PC-9 (cell line): ENCODE measurements at regions of chr11 and their contacts with region 1.

Region 1: GRCh38 chr11:46616998-46617675 is at the starts of genes ATG13 and HARBI1:
- DNase-seq: peak; percentile 72 to 94
- H3K4me3 ChIP-seq: peak within 1 kb of the TSS; percentile 95
- H3K27ac ChIP-seq: peak within 1 kb of the TSS; percentile 95
- H3K4me1 ChIP-seq: peaks cover 24% of the 10 kb centered on the region
- H3K27me3 ChIP-seq: no peaks in the 10 kb centered on the region
- CTCF ChIP-seq: no peak
- total RNA-seq, gene ATG13: 109 TPM in 2 replicates
- total RNA-seq, gene HARBI1: 6.6 and 8.0 TPM in 2 replicates

Region 2: GRCh38 chr11:46380340-46381047 is 236.6 kb before region 1 on chr11:
- CTCF ChIA-PET with region 1: interaction called, 3 read pairs
- POLR2A ChIA-PET with region 1: no interaction called
- intact Hi-C with region 1: loop called (anchors 5 kb)
- DNase-seq: peak; percentile 33 to 80
- H3K4me3 ChIP-seq: peak overlapping the region; percentile 73
- H3K27ac ChIP-seq: peak overlapping the region; percentile 5; the same call in 1 of the 2 replicates
- H3K4me1 ChIP-seq: peaks cover 21% of the 10 kb centered on the region
- H3K27me3 ChIP-seq: no peaks in the 10 kb centered on the region
- CTCF ChIP-seq: no peak

Region 3: GRCh38 chr11:46537537-46538295 is 79.4 kb before region 1 on chr11:
- CTCF ChIA-PET with region 1: no interaction called
- POLR2A ChIA-PET with region 1: no interaction called
- intact Hi-C with region 1: loop called (anchors 1 kb)
- DNase-seq: peak; percentile 66 to 76
- H3K4me3 ChIP-seq: no peak overlapping the region
- H3K27ac ChIP-seq: 0 out of 2 replicates have a peak overlapping the region, but pooled peaks have one; percentile 5
- H3K4me1 ChIP-seq: peaks cover 8% of the 10 kb centered on the region; the same call in 1 of the 2 replicates
- H3K27me3 ChIP-seq: no peaks in the 10 kb centered on the region
- CTCF ChIP-seq: peak; percentile 97

Region 4: GRCh38 chr11:46603704-46604308 is 13.3 kb before region 1 on chr11:
- CTCF ChIA-PET with region 1: no interaction called
- POLR2A ChIA-PET with region 1: no interaction called
- intact Hi-C with region 1: no loop called
- DNase-seq: no peak
- H3K4me3 ChIP-seq: no peak overlapping the region
- H3K27ac ChIP-seq: no peak overlapping the region
- H3K4me1 ChIP-seq: no peaks in the 10 kb centered on the region
- H3K27me3 ChIP-seq: no peaks in the 10 kb centered on the region
- CTCF ChIP-seq: no peak

Region 5: DNA sequence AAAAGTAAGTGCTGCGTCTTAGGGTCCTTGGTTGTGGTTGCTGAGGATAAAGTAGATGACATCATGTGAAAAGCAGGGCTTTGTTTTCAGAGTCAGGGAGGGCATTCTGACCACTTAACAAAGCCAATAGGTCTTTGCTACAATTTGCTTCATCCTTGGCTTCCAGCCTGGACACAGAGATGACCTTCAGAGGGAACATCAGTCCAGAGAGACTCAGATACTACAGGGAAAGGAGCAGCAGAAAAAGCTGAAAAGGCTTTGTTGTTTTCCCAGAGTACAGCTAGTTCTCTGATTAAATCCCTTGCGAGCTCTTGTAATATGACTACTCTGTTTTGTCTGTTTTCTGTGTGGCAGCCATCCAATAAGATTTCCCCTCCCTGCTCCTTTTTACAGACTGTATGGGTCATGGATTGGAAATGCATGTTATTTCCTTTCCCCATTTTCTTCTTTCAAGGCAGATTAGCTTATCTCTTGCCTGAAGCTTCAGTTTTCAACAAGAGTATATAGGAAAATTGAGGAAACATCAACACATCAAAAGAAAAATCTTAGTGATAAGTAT is 32.1 kb after region 1 on chr11:
- CTCF ChIA-PET with region 1: no interaction called
- POLR2A ChIA-PET with region 1: no interaction called
- intact Hi-C with region 1: no loop called
- DNase-seq: peak in 1 of 2 experiments; percentile 19
- H3K4me3 ChIP-seq: no peak overlapping the region
- H3K27ac ChIP-seq: no peak overlapping the region
- H3K4me1 ChIP-seq: no peaks in the 10 kb centered on the region
- H3K27me3 ChIP-seq: no peaks in the 10 kb centered on the region
- CTCF ChIP-seq: no peak

Region 6: DNA sequence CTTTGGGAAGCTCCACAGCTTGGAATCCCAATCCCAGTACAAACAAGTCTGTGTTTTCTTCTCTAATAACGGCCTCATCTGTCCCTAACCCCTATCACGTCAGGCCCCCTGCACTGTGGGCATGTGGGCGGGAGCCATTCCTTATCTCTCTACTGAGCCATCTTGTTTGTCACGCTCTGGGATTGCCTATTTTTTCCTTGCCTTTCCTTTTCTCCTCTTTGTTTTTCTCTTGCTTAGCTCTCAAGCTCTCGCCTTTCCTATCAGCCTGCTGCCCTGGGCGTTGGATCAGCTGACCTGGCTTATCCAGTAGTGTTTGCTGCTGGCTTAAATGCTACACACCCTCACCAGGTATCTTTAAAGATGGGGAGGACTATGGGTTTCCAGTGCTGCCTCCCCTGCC is 47.5 kb after region 1 on chr11:
- CTCF ChIA-PET with region 1: no interaction called
- POLR2A ChIA-PET with region 1: interaction called, 23 read pairs
- intact Hi-C with region 1: no loop called
- DNase-seq: no peak
- H3K4me3 ChIP-seq: no peak overlapping the region
- H3K27ac ChIP-seq: no peak overlapping the region
- H3K4me1 ChIP-seq: no peaks in the 10 kb centered on the region
- H3K27me3 ChIP-seq: no peaks in the 10 kb centered on the region
- CTCF ChIP-seq: no peak

Region 7: DNA sequence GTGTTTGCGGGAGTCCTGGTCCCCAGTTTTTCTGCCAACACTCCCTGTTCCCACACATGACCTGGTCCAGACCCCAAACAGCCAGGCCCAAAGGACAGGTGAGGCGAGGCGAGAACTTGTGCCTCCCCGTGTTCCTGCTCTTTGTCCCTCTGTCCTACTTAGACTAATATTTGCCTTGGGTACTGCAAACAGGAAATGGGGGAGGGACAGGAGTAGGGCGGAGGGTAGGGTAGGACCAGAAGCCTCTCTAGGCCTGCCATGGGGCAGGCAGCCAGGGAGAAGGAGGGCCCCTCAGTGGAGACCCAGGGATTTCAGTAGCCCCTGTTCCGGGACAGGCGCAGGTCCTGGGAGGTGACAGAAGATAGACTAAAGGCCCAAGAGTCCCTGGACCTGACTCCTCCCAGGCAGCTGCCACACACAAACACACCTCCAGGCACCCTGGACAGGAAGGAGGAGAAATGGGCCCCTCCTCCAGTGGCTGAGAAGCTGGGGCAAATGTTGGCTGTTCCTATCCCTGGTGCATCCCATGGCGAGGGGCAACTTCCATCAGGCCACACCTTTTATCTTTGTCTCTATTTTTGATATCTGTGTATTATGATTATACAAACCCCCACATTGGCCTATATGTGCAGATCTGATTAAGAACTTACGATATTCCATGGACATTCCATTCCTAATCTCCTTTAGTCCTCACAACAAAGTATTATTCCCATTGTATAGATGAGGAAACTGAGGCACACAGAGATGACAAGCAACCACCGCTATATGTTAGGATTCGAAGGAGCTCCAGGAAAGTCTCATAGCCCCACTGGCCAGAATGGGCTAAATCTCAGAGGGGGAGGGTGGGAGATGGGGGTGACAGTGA is 101.2 kb after region 1 on chr11:
- CTCF ChIA-PET with region 1: no interaction called
- POLR2A ChIA-PET with region 1: no interaction called
- intact Hi-C with region 1: no loop called
- DNase-seq: no peak
- H3K4me3 ChIP-seq: no peak overlapping the region
- H3K27ac ChIP-seq: no peak overlapping the region
- H3K4me1 ChIP-seq: peaks cover 28% of the 10 kb centered on the region
- H3K27me3 ChIP-seq: no peaks in the 10 kb centered on the region
- CTCF ChIP-seq: no peak